Activated CD8-positive, alpha-beta memory T cell treated with anti-CD3 and anti-CD28 coated beads, Interleukin-2, amount 10 ng/mL, durations not matched to agents 7 days and 5 days (primary cell): ENCODE measurements at regions of chr17 and their contacts with region 1.

Region 1: DNA sequence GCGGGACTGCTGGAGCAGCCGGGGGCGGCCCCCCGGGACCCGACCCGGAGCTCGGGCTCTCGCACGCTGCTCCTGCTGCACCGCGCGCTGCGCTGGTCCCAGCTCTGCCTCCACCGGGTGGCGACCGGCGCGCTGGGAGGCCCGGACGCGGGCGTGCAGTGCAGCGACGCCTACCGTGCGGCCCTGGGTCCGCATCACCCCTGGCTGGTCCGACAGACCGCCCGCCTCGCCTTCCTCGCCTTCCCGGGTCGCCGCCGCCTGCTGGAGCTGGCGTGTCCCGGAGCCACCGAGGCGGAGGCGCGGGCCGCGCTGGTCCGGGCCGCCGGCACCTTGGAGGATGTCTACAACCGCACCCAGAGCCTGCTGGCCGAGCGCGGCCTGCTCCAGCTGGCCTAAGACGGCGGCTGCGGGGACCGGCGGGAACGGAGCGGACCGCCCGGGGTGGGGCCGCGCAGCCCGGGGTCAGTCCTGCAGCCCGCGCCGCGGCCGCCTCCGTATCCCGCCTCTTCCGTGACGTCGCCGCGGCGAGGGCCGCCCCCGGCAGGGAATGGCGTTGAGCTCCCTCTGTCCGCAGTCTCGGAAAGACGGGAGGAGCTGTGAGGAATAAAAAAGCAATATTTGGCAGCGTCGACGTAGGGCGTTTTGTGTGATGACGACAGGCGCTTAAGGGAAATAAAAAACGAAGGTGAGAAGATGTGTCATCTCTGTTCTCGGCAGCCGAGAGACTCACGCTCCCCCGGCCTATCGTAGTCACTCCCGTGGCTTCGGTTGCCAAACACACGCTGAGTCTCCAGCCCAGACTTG is 1.3 kb downstream of the GLTPD2 start:
- DNase-seq: peak; percentile 88
- ATAC-seq: peak; percentile 93
- H3K4me3 Mint-ChIP-seq: peak overlapping the region; percentile 86
- H3K27ac Mint-ChIP-seq: peak overlapping the region; percentile 90
- H3K4me1 Mint-ChIP-seq: peaks cover 30% of the 10 kb centered on the region
- H3K27me3 Mint-ChIP-seq: peaks cover 46% of the 10 kb centered on the region

Region 2: GRCh38 chr17:4565209-4566141 is 224.6 kb before region 1 on chr17:
- CTCF ChIA-PET with region 1: interaction called, 10 read pairs
- DNase-seq: peak; percentile 75
- ATAC-seq: peak; percentile 79
- H3K4me3 Mint-ChIP-seq: peak overlapping the region; percentile 40
- H3K27ac Mint-ChIP-seq: no peak overlapping the region
- H3K4me1 Mint-ChIP-seq: peaks cover 37% of the 10 kb centered on the region
- H3K27me3 Mint-ChIP-seq: peaks cover 4% of the 10 kb centered on the region

Region 3: DNA sequence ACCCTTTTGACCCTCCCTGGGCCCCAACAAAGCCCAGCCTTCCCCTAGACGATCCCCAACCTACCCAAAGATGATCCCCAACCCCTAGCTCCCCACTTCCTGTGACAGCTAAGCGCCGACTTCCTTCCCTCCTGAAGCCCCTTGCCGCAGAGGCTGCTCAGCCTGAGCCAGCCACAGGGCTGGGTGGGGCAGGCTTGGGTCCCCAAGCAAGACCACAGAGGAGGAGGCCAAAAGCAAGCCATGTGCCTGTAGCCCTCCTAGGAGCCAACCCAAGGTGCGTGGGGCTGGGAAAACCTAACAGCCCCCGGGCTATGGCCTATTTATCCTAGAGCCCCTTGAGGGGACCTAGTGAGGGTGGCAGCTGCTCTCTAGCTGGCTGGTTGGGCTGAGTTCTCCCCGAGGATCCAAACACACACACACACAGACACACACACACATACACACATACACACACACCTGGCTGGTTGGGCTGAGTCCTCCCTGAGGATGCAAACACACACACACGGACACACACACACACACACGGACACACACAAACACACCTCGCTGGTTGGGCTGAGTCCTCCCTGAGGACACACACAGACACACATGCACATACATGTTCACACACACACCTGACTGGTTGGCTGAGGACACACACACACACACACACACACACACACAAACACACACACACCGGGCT is 74.9 kb before region 1 on chr17:
- CTCF ChIA-PET with region 1: interaction called, 39 read pairs
- DNase-seq: peak; percentile 88
- ATAC-seq: peak; percentile 9
- H3K4me3 Mint-ChIP-seq: peak overlapping the region; percentile 82
- H3K27ac Mint-ChIP-seq: peak overlapping the region; percentile 94
- H3K4me1 Mint-ChIP-seq: peaks cover 73% of the 10 kb centered on the region
- H3K27me3 Mint-ChIP-seq: no peaks in the 10 kb centered on the region

Region 4: GRCh38 chr17:4747847-4748246 is 42.3 kb before region 1 on chr17:
- CTCF ChIA-PET with region 1: interaction called, 14 read pairs
- DNase-seq: peak; percentile 65
- ATAC-seq: peak; percentile 90
- H3K4me3 Mint-ChIP-seq: peak overlapping the region; percentile 54
- H3K27ac Mint-ChIP-seq: peak overlapping the region; percentile 38
- H3K4me1 Mint-ChIP-seq: peaks cover 22% of the 10 kb centered on the region
- H3K27me3 Mint-ChIP-seq: peaks cover 42% of the 10 kb centered on the region

Region 5: DNA sequence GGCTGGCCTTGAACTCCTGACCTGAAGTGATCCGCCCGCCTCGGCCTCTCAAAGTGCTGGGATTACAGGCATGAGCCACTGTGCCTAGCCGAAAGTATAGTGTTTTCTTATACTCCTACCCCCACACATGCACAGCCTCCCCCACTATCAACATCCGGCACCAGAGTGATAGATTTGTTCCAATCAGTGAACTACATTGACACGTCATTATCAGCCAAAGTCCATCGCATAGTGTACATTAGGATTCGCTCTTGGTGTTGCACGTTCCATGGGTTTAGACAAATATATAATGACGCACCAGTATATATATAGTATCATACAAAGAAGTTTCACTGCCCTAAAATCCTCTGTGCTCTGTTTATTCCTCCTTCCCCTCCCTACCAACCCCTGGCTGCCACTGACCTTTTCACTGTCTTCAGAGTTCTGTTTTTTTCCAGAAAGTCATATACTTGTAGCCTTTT is 30.3 kb before region 1 on chr17:
- CTCF ChIA-PET with region 1: no interaction called
- DNase-seq: no peak
- ATAC-seq: no peak
- H3K4me3 Mint-ChIP-seq: no peak overlapping the region
- H3K27ac Mint-ChIP-seq: no peak overlapping the region
- H3K4me1 Mint-ChIP-seq: no peaks in the 10 kb centered on the region
- H3K27me3 Mint-ChIP-seq: peaks cover 35% of the 10 kb centered on the region

Region 6: GRCh38 chr17:4806777-4807604 is 16.9 kb after region 1 on chr17 and contains the start of gene PLD2:
- CTCF ChIA-PET with region 1: interaction called, 29 read pairs
- DNase-seq: peak; percentile 89
- ATAC-seq: peak; percentile 99
- H3K4me3 Mint-ChIP-seq: peak within 1 kb of the TSS; percentile 69
- H3K27ac Mint-ChIP-seq: no peak within 1 kb of the TSS
- H3K4me1 Mint-ChIP-seq: peaks cover 13% of the 10 kb centered on the region
- H3K27me3 Mint-ChIP-seq: no peaks in the 10 kb centered on the region
- total RNA-seq, gene PLD2: 11.7 to 14.5 TPM

Region 7: GRCh38 chr17:4849011-4849536 is 59.0 kb after region 1 on chr17:
- CTCF ChIA-PET with region 1: no interaction called
- DNase-seq: no peak
- ATAC-seq: no peak
- H3K4me3 Mint-ChIP-seq: no peak overlapping the region
- H3K27ac Mint-ChIP-seq: no peak overlapping the region
- H3K4me1 Mint-ChIP-seq: peaks cover 11% of the 10 kb centered on the region
- H3K27me3 Mint-ChIP-seq: peaks cover 4% of the 10 kb centered on the region

Region 8: DNA sequence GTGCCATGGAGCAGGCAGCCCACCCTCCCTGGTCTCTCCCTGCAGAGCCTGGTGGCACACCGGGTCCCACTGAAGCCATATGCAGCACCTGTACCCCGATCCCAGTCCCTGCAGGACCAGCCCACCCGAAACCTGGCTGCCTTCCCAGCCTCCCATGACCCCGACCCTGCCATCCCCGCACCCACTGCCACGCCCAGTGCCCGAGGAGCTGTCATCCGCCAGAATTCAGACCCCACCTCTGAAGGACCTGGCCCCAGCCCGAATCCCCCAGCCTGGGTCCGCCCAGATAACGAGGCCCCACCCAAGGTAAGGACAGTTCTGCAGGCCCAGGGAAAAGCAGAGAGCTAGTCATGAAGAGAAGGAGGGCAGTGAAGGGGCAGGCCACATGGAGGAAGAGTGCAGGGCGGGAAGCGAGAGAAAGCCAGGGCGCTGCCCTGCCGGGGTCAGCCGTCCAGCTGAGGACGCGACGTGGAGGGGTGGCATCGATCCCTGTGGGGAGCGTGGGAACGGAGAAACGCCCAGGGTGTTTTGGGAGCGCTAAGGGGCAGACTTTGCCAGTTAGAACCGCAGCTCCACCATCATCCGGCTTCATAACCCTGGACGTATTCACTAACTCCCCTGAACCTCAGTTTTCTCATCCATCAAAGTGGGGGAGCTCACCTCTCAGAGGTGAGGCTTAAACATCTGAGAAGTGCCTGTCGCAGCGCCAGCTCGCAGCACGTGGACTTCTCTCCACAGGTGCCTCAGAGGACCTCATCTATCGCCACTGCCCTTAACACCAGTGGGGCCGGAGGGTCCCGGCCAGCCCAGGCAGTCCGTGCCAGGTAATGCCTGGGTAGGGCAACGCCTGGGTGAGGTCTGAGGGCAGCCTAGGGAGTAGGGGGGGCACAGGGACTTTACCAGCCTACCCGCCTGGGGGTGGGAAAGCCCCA is 101.6 kb after region 1 on chr17:
- CTCF ChIA-PET with region 1: interaction called, 26 read pairs
- DNase-seq: no peak
- ATAC-seq: no peak
- H3K4me3 Mint-ChIP-seq: no peak overlapping the region
- H3K27ac Mint-ChIP-seq: no peak overlapping the region
- H3K4me1 Mint-ChIP-seq: peaks cover 2% of the 10 kb centered on the region
- H3K27me3 Mint-ChIP-seq: no peaks in the 10 kb centered on the region